MCF 10A (cell line): ENCODE measurements at regions of chr1 and their contacts with region 1.

Region 1: GRCh38 chr1:224113918-224114786 is at the start of gene FBXO28:
- DNase-seq: peak; percentile 99
- H3K4me3 Mint-ChIP-seq: peak within 1 kb of the TSS; percentile 90
- H3K27ac Mint-ChIP-seq: peak within 1 kb of the TSS; percentile 82
- H3K4me1 Mint-ChIP-seq: peaks cover 8% of the 10 kb centered on the region
- H3K27me3 Mint-ChIP-seq: no peaks in the 10 kb centered on the region
- CTCF ChIP-seq: no peak
- total RNA-seq, gene FBXO28: 97.6 and 110 TPM in 2 replicates

Region 2: DNA sequence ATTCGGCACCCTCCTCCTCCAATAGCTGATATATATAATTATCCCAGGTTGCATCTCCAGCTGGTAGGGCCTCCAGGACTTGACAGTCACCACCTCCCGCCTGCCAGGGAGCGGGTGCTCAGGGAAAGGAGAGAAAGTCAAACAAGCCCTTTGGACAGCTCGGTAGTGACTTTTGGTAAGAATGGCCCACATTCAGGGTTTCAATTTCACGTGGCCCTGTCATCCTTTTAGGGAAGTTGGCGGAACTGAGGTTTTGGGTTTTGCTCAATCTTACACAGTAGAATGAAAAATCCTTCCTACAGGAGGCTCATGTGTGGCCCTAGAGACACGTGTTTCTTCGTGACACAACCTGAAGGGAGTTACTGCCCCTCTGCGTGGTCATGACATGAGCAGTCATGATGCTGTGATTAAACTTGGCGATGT is 492.8 kb before region 1 on chr1:
- CTCF ChIA-PET with region 1: no interaction called
- POLR2A ChIA-PET with region 1: no interaction called
- intact Hi-C with region 1: no loop called
- DNase-seq: no peak
- H3K4me3 Mint-ChIP-seq: no peak overlapping the region
- H3K27ac Mint-ChIP-seq: no peak overlapping the region
- H3K4me1 Mint-ChIP-seq: no peaks in the 10 kb centered on the region
- H3K27me3 Mint-ChIP-seq: no peaks in the 10 kb centered on the region
- CTCF ChIP-seq: no peak

Region 3: DNA sequence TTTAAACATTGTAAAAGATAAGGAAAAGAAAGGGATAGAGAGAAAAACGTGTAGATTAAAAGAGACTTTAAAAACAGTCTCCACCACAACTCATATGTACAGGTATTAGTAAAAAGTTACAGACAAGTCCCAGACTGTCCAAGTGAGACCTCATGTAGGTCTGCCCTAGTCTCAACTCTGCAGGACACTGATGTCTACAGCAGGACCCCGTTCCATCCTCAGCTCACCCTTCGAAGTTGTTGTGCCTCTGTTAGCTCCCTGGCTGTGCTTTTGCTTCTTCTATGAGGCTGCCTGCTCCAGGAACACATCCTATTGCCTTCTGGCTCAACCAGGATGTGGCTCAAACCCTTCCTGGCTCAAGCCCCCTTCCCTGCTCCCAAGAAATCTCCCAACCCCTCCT is 73.1 kb before region 1 on chr1:
- CTCF ChIA-PET with region 1: no interaction called
- POLR2A ChIA-PET with region 1: no interaction called
- intact Hi-C with region 1: no loop called
- DNase-seq: no peak
- H3K4me3 Mint-ChIP-seq: no peak overlapping the region
- H3K27ac Mint-ChIP-seq: no peak overlapping the region
- H3K4me1 Mint-ChIP-seq: no peaks in the 10 kb centered on the region
- H3K27me3 Mint-ChIP-seq: peaks cover 11% of the 10 kb centered on the region
- CTCF ChIP-seq: no peak

Region 4: GRCh38 chr1:224052772-224053171 is 61.4 kb before region 1 on chr1:
- CTCF ChIA-PET with region 1: interaction called, 10 read pairs
- POLR2A ChIA-PET with region 1: interaction called, 3 read pairs
- intact Hi-C with region 1: no loop called
- DNase-seq: peak; percentile 39
- H3K4me3 Mint-ChIP-seq: no peak overlapping the region
- H3K27ac Mint-ChIP-seq: no peak overlapping the region
- H3K4me1 Mint-ChIP-seq: peaks cover 10% of the 10 kb centered on the region
- H3K27me3 Mint-ChIP-seq: no peaks in the 10 kb centered on the region
- CTCF ChIP-seq: no peak

Region 5: GRCh38 chr1:224133741-224134314 is 19.7 kb after region 1 on chr1:
- CTCF ChIA-PET with region 1: interaction called, 49 read pairs
- POLR2A ChIA-PET with region 1: interaction called, 58 read pairs
- intact Hi-C with region 1: no loop called
- DNase-seq: no peak
- H3K4me3 Mint-ChIP-seq: no peak overlapping the region
- H3K27ac Mint-ChIP-seq: peak overlapping the region; percentile 46
- H3K4me1 Mint-ChIP-seq: peaks cover 6% of the 10 kb centered on the region
- H3K27me3 Mint-ChIP-seq: no peaks in the 10 kb centered on the region
- CTCF ChIP-seq: no peak

Region 6: DNA sequence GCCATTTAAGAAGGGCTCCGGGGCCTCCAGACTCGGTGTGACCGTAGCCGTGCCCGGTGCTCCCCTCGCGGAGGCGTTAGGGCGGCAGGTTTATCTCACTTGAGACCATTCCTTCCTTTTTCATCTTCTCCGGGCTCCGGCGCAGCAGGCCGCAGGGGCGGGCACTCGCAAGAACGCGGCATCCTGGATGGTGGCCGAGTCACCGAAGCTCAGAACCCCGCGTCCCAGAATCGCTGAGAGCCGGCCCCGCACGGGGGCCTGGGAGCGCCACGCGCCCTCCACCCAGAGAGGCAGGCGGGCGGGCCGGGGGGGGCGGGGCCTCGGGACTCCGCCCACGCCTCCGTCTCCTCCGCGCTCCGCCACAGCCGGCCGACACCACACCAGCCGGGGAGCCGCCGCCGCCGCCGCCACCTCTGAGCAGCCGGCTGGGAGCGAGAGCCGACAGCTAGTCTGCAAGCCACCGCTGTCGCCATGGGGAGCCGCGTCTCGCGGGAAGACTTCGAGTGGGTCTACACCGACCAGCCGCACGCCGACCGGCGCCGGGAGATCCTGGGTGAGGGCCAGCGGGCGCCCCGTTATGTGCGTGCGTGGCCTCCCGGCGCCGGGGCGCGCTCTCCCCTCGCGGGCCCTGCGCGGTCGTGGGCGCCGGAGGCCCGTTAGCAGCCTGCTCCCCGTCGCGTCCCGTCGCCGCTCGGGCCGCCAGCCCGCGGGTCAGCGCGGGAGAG is 68.9 kb after region 1 on chr1 and contains the start of gene DEGS1:
- CTCF ChIA-PET with region 1: interaction called, 10 read pairs
- POLR2A ChIA-PET with region 1: interaction called, 36 read pairs
- intact Hi-C with region 1: loop called (anchors 2 kb)
- DNase-seq: peak; percentile 94
- H3K4me3 Mint-ChIP-seq: peak within 1 kb of the TSS; percentile 85
- H3K27ac Mint-ChIP-seq: peak within 1 kb of the TSS; percentile 91
- H3K4me1 Mint-ChIP-seq: peaks cover 30% of the 10 kb centered on the region
- H3K27me3 Mint-ChIP-seq: no peaks in the 10 kb centered on the region
- CTCF ChIP-seq: no peak
- total RNA-seq, gene DEGS1: 99.1 and 118 TPM in 2 replicates

Region 7: DNA sequence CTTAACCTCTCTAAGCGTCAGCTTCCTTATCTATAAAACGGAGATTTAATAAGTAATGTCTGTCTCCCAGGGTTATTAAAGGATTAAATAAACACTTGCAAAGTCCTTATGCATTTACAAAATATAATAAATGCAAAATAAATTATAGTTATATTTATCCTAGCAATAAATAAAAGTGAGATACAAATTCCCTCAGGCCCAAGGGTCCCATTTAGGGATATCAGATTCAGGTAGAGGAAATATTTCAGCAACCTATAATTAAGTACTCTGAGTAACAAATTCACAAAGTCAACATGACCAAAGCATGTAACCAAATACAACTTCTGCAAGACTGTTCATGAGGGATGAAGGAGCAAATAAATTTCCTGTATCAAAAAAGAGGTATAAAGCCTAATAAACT is 197.9 kb after region 1 on chr1:
- CTCF ChIA-PET with region 1: interaction called, 23 read pairs
- POLR2A ChIA-PET with region 1: no interaction called
- intact Hi-C with region 1: no loop called
- DNase-seq: no peak
- H3K4me3 Mint-ChIP-seq: no peak overlapping the region
- H3K27ac Mint-ChIP-seq: no peak overlapping the region
- H3K4me1 Mint-ChIP-seq: no peaks in the 10 kb centered on the region
- H3K27me3 Mint-ChIP-seq: no peaks in the 10 kb centered on the region
- CTCF ChIP-seq: no peak

Region 8: DNA sequence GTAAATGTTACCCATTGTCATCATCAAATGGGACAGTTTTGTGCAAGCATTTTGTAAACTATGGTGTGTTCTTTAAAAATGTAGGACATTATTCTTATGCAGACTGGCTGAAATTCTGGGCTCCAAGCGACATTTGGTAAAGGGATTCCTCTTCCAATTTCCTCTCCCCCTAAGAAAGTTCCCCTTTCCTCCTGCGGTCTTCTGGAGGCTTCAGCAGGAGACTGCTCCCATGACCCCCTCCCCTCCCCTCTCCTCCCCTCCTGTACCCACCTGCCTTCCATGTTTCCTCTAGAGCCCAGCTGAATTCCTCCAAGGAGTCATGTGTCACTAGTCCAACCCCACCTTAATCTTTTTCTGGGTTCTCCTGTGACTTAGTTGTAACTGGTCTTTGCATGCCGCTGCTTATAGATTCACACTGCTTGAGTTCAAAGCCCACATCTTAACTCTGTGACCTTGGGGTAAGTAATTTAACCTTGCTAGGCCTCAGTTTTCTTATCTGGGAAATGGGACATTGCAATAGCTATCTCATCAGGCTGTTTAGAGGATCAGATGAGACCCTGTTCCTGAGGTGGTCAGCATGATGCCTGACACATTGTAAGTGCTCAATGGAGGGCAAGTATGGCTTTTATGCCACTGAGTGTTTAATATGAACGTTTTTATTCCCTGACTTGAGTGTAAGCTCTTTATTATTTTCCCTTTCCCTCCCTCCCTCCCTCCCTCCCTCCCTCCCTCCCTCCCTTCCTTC is 390.3 kb after region 1 on chr1:
- CTCF ChIA-PET with region 1: no interaction called
- POLR2A ChIA-PET with region 1: no interaction called
- intact Hi-C with region 1: no loop called
- DNase-seq: no peak
- H3K4me3 Mint-ChIP-seq: peak overlapping the region; percentile 48
- H3K27ac Mint-ChIP-seq: peak overlapping the region; percentile 92
- H3K4me1 Mint-ChIP-seq: peaks cover 63% of the 10 kb centered on the region
- H3K27me3 Mint-ChIP-seq: no peaks in the 10 kb centered on the region
- CTCF ChIP-seq: no peak